ENCODE measurements at regions of chr3 and their contacts with region 1.

Region 1: GRCh38 chr3:128845778-128846485 is 33.5 kb upstream of the ACAD9 start:
- DNase-seq: peak; percentile 82
- ATAC-seq: peak; percentile 84
- H3K4me3 Mint-ChIP-seq: peak overlapping the region; percentile 68
- H3K27ac Mint-ChIP-seq: peak overlapping the region; percentile 82
- H3K4me1 Mint-ChIP-seq: peaks cover 19% of the 10 kb centered on the region
- H3K27me3 Mint-ChIP-seq: no peaks in the 10 kb centered on the region

Region 2: GRCh38 chr3:128804017-128804810 is 41.7 kb before region 1 on chr3:
- CTCF ChIA-PET with region 1: interaction called, 13 read pairs
- POLR2A ChIA-PET with region 1: interaction called, 6 read pairs
- DNase-seq: peak; percentile 82
- ATAC-seq: peak; percentile 89
- H3K4me3 Mint-ChIP-seq: peak overlapping the region; percentile 71
- H3K27ac Mint-ChIP-seq: peak overlapping the region; percentile 90
- H3K4me1 Mint-ChIP-seq: peaks cover 68% of the 10 kb centered on the region
- H3K27me3 Mint-ChIP-seq: no peaks in the 10 kb centered on the region

Region 3: GRCh38 chr3:128835096-128835495 is 10.8 kb before region 1 on chr3:
- CTCF ChIA-PET with region 1: no interaction called
- POLR2A ChIA-PET with region 1: no interaction called
- DNase-seq: no peak
- ATAC-seq: no peak
- H3K4me3 Mint-ChIP-seq: no peak overlapping the region
- H3K27ac Mint-ChIP-seq: no peak overlapping the region
- H3K4me1 Mint-ChIP-seq: no peaks in the 10 kb centered on the region
- H3K27me3 Mint-ChIP-seq: no peaks in the 10 kb centered on the region

Region 4: GRCh38 chr3:128932516-128933212 is 86.7 kb after region 1 on chr3:
- CTCF ChIA-PET with region 1: no interaction called
- POLR2A ChIA-PET with region 1: no interaction called
- DNase-seq: peak; percentile 14
- ATAC-seq: no peak
- H3K4me3 Mint-ChIP-seq: no peak overlapping the region
- H3K27ac Mint-ChIP-seq: no peak overlapping the region
- H3K4me1 Mint-ChIP-seq: no peaks in the 10 kb centered on the region
- H3K27me3 Mint-ChIP-seq: peaks cover 8% of the 10 kb centered on the region